Activated naive CD8-positive, alpha-beta T cell treated with anti-CD3 and anti-CD28 coated beads, Interleukin-2, amount 10 ng/mL, durations not matched to agents 7 days and 5 days (primary cell): ENCODE measurements at regions of chr13 and their contacts with region 1.

Region 1: DNA sequence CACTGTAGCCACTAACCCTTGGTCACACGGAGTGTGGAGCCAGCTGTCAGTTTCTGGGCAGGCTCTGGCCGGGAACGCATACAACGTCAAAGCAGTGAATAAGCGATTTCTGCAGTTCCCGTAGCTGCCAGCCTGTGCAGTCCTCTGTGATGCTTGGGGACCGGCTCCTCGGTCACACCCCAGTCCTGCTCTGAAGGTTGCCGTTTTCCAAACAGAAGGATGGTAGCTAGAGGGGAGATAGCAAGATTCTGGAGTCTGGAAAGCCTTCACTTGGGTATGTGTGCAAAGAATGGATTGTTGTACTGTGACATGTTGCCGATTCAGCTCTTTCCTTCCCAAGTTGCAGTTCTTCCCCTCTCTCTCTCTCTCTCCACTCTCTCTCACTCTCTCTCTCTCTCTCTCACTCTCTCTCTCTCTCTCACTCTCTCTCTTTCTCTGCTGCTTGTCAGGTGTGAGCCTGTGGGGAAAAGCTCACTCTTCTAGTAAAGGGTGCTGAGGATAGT is 38.7 kb upstream of the C1QTNF9 start:
- DNase-seq: peak; percentile 69
- ATAC-seq: peak; percentile 44
- H3K4me3 Mint-ChIP-seq: peak overlapping the region; percentile 91
- H3K27ac Mint-ChIP-seq: peak overlapping the region; percentile 98
- H3K4me1 Mint-ChIP-seq: peaks cover 79% of the 10 kb centered on the region
- H3K27me3 Mint-ChIP-seq: no peaks in the 10 kb centered on the region

Region 2: DNA sequence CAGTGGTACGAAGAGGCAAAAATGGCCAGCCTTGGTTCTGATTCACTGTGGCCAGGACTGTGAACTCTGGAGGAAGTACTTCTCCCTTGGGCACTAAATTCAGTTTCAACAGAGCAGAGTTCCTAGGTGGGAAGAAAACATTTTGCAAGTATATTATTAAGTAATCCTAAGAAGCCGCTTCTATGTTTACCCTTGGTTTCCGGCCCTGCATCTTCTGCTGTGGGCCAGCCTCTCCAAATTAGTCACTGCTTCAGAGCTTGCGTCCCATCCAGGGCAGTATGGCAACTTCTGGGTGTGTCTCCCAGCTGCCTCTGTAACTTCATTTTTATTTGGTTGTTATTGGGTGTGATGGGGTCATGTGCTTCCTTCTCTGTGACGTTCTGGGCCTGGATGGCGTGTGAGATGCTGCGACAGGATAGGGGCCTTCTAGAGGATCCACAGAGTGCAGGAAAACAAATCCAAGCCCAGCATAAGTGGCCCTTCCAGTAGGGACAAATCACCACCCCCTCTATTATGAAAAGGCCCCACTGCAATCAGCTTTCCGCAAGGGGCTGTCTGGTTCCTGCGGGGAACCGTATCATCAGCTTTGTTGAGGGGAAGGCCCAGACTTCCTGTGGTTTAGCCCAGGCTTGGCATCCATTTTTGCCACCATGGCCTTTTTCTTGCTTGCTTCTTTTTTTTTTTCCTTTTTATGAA is 16.4 kb before region 1 on chr13:
- POLR2A ChIA-PET with region 1: interaction called, 359 read pairs
- DNase-seq: peak; percentile 57
- ATAC-seq: peak; percentile 62
- H3K4me3 Mint-ChIP-seq: peak overlapping the region; percentile 91
- H3K27ac Mint-ChIP-seq: peak overlapping the region; percentile 93
- H3K4me1 Mint-ChIP-seq: peaks cover 72% of the 10 kb centered on the region
- H3K27me3 Mint-ChIP-seq: no peaks in the 10 kb centered on the region